ENCODE measurements at regions of chr6 and their contacts with region 1.

Region 1: GRCh38 chr6:32047850-32048766 is 9.9 kb downstream of the CYP21A2 start:
- DNase-seq: peak; percentile 31 to 97
- H3K4me3 ChIP-seq: no peak overlapping the region
- H3K27ac ChIP-seq: no peak overlapping the region
- H3K4me1 ChIP-seq: peaks cover 0 to 7% (median 4%) of the 10 kb centered on the region in 4 experiments; a peak in 4 of 7 replicates
- H3K27me3 ChIP-seq: no peaks in the 10 kb centered on the region
- CTCF ChIP-seq: peak; percentile 86 to 93 (median 92)
- EP300 ChIP-seq: no peak
- POLR2A ChIP-seq: no peak
- RAD21 ChIP-seq: peak; percentile 60 to 74

Region 2: DNA sequence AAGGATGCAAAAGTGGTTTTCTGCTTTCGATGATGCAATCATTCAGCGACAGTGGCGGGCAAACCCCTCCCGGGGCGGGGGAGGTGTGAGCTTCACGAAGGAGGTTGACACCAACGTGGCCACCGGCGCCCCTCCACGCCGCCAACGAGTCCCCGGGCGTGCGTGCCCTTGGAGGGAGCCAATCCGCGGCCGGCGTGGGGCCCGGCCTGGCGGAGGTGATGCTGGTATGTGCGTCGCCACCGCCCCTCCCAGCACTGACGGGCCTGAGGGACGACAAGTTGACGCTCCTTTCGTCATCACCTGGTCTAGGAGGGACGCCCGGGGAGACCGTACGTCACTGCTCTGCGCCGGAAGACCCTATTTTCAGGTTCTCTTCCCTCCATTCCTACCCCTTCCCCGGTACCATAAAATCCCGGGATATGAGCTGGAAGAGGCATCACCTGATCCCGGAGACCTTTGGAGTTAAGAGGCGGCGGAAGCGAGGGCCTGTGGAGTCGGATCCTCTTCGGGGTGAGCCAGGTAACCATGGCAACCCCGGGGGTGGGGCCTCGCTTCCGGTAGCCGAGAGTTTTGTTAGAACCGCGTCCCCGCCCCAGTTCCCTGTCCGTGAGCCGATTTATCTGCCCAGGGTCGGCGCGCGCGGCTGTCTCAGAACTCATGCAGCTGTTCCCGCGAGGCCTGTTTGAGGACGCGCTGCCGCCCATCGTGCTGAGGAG is 76.0 kb before region 1 on chr6 and contains the start of gene DXO:
- CTCF ChIA-PET with region 1: interaction called, 10 read pairs
- POLR2A ChIA-PET with region 1: interaction called, 14 read pairs
- DNase-seq: peak; percentile 80 to 98
- H3K4me3 ChIP-seq: peak within 1 kb of the TSS; percentile 68 to 94 (median 84)
- H3K27ac ChIP-seq: peak within 1 kb of the TSS; percentile 90
- H3K4me1 ChIP-seq: peaks cover 0 to 9% (median 5%) of the 10 kb centered on the region in 4 experiments; a peak in 5 of 7 replicates
- H3K27me3 ChIP-seq: no peaks in the 10 kb centered on the region; a peak in 1 of 7 replicates
- CTCF ChIP-seq: no peak
- EP300 ChIP-seq: no peak
- POLR2A ChIP-seq: peak in 1 of 2 experiments; percentile 79; a peak in 2 of 3 replicates
- RAD21 ChIP-seq: no peak
- total RNA-seq, gene DXO: 14.7 and 16.2 TPM in 2 replicates

Region 3: DNA sequence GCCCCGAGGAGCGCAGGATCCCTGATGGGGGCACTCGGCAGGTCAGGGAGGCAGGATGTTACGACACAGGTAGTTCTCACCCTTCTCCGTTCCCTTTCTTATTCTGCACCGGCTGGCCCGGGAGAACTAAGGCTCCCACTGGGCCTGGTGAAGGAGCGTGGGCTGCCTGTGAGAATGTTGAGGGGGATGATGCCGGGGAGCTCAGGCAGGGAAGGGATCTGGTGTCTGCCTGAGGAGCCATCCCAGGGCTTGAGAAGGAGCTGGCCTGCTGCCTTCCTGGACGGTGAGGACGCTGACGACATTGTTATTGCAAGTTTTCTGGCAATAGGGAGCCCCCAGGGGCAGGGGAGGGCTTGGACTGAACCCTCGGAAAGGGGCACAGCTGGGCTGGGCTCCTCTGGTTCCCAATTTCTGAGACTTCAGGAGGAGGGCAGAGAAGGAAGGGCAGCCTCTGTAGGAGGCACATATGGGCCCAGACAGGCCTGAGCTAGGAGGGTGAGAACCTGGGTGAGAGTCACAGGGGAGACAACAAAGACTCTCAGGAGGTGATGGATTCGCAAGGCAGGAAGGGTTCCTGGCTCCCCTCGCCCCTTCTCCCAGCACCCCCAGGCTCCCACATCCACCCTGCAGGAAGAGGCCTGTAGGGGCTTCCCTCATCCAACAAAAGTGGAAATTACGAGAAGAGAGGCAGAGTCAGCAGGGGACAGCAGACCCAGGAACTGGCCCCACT is 22.9 kb after region 1 on chr6:
- CTCF ChIA-PET with region 1: interaction called, 16 read pairs
- POLR2A ChIA-PET with region 1: interaction called, 5 read pairs
- DNase-seq: no peak
- H3K4me3 ChIP-seq: no peak overlapping the region
- H3K27ac ChIP-seq: no peak overlapping the region
- H3K4me1 ChIP-seq: peaks cover 0 to 8% (median 5%) of the 10 kb centered on the region in 4 experiments; a peak in 6 of 7 replicates
- H3K27me3 ChIP-seq: no peaks in the 10 kb centered on the region; a peak in 1 of 7 replicates
- CTCF ChIP-seq: no peak
- EP300 ChIP-seq: no peak
- POLR2A ChIP-seq: no peak
- RAD21 ChIP-seq: no peak

Region 4: DNA sequence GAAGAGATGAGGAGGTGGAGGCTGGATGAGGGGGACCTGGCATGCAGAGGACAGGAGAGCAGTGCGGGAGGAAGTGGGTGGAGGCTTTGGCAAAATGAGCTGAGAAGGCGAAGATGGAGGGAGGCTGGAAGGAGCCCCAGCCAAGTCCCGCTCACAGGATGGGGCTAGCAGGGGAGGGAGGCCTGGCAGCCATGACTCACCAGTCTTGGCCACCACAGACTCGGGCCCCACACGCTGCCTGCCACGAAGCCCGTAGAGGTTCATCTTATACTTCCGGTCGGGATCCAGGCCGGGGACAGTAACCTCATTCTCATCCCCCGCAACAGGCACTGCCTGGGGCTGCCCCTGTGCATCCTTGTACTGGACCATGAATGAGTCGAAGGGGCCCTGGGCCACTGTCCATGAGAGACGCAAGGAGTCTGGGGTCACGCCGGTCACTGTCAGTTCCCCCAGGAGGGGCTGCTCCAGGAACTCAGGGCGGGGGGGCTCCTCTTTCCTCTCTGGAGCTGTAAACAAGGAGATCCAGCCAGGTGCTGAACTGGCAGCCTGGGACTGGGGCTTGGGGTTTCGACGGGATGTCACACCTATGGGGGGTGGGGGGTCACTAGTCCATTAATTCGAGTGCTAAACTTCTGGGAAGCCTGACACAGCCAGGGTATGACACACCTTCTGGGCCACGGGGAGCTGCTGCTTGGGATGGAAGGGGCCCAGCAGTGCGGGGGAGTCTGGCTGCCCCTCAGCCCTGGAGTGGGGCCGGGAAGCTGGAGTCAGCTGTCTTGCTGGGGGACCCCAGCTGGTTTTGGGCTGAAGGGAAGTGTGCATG is 33.3 kb after region 1 on chr6:
- CTCF ChIA-PET with region 1: interaction called, 28 read pairs
- POLR2A ChIA-PET with region 1: interaction called, 3 read pairs
- DNase-seq: no peak
- H3K4me3 ChIP-seq: no peak overlapping the region
- H3K27ac ChIP-seq: no peak overlapping the region
- H3K4me1 ChIP-seq: peaks cover 0 to 2% (median under 1%) of the 10 kb centered on the region in 4 experiments; a peak in 4 of 7 replicates
- H3K27me3 ChIP-seq: peaks cover 0 to 3% (median 3%) of the 10 kb centered on the region in 4 experiments; a peak in 4 of 7 replicates
- CTCF ChIP-seq: no peak
- EP300 ChIP-seq: no peak
- POLR2A ChIP-seq: no peak
- RAD21 ChIP-seq: no peak

Measured in H1 (cell line).